Activated naive CD4-positive, alpha-beta T cell treated with anti-CD3 and anti-CD28 coated beads, Interleukin-2, amount 10 ng/mL, durations not matched to agents 7 days and 5 days (primary cell): ENCODE measurements at regions of chr1 and their contacts with region 1.

Region 1: GRCh38 chr1:192808518-192809306 is at the start of gene RGS2:
- DNase-seq: peak; percentile 90
- H3K4me3 Mint-ChIP-seq: peak within 1 kb of the TSS; percentile 89
- H3K27ac Mint-ChIP-seq: peak within 1 kb of the TSS; percentile 78
- H3K4me1 Mint-ChIP-seq: peaks cover 29% of the 10 kb centered on the region
- H3K27me3 Mint-ChIP-seq: peaks cover 20% of the 10 kb centered on the region

Region 2: GRCh38 chr1:193019442-193020026 is 210.8 kb after region 1 on chr1:
- CTCF ChIA-PET with region 1: interaction called, 49 read pairs
- DNase-seq: no peak
- H3K4me3 Mint-ChIP-seq: no peak overlapping the region
- H3K27ac Mint-ChIP-seq: no peak overlapping the region
- H3K4me1 Mint-ChIP-seq: no peaks in the 10 kb centered on the region
- H3K27me3 Mint-ChIP-seq: no peaks in the 10 kb centered on the region

Region 3: DNA sequence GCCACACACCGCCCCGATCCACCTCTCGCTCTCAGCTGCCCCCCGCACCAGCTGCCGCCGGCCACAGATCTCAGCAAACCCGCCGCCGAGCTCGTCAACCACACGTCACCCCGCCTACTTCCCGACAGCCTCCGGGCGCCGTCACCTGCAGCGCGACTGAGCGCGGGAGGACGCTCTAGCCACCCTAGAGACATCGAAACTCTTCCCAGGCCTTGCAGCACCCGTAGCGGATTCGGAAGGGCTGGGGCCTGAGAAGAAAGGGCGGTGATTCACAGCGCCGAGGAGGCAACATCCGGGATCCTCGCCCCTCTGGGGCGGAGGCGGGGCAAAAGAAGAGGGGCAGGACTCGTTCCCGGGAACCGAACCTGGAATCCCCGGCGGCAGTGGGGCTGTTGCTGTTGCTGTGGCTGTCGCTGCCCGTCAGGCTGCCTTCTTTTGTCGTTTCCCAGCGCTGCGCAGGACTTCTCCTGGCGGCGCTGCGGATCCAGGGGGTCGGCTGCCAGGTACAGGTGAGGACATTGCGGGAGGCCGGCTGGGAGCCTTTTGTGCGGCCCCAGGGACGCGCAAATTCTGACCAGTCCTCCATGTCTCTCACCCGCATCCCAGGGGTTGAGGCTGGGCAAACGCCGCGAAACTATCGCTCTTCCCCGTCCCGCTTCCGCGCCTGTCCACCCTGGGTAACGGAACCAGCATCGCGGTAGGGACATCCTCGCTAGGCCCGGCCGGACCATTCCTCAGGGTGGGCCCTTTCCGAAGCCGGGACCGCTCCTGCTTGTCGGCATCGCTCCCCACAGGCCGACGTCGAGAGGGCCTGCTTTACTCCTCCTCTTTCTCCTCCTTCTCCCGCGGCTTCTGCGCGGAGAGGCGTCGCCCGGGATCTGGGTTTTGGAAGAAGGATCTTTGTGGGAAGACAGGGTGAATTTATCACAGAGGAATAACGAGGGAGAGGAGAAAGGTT is 250.8 kb after region 1 on chr1 and contains the starts of genes RO60 and UCHL5:
- CTCF ChIA-PET with region 1: interaction called, 11 read pairs
- DNase-seq: peak; percentile 96
- H3K4me3 Mint-ChIP-seq: peak within 1 kb of the TSS; percentile 99
- H3K27ac Mint-ChIP-seq: peak within 1 kb of the TSS; percentile 99
- H3K4me1 Mint-ChIP-seq: peaks cover 52% of the 10 kb centered on the region
- H3K27me3 Mint-ChIP-seq: peaks cover 5% of the 10 kb centered on the region